Psoas muscle (tissue), 8 donors: ENCODE measurements at regions of chr17 and their contacts with region 1.

Region 1: DNA sequence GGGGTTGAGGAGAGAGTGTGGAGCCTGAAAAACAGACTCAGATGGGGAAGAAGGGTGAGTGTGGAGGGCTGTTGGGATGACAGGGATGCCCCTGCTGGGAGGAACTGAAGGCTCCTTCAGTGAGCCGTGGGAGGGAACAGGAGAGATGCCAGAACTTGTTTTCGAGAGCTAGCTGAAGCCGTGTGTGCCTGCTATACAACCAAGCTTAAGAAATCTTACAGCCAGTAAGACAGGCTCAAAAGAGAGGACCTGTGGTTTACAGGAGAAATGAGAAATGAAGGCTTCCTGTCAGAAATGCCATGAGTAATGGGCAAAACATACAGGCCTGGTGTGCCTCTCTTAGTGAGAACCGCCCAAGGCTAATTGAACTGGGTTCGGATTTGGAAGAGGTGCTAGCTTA is 99.6 kb downstream of the SPACA3 start:
- DNase-seq: no peak
- ATAC-seq: no peak
- H3K4me3 ChIP-seq: no peak overlapping the region
- H3K27ac ChIP-seq: no peak overlapping the region
- H3K4me1 ChIP-seq: no peaks in the 10 kb centered on the region
- H3K27me3 ChIP-seq: peaks cover 0 to 9% (median 3%) of the 10 kb centered on the region in 3 donors
- CTCF ChIP-seq: no peak

Region 2: DNA sequence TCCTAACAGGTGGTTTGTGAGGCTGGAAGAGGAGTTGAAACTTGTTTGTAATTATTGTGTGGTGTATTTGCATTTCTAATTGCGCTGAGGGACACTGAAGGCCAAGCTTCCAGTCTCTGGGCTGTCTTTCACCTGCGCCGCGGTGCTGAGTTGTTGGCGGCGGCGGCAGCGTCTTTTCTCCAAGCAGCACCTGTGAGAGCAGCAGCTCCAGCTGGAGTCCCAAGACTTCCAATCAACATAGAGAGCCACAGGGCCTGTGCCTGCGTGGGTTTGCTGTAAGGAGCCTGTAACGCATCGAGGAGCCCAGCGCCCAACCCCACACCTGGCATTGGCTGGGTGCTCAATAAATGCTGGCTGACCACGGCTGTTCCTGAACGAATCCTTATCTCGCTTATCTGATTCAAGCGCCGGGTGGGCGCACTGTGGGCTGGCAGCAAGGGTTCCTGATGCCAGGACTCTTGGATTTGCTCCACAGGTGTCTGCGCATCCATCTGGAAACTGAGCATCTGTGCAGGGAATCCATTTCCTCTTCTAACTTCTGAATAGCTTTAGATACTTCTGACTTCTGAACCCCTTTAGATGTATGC is 63.7 kb after region 1 on chr17:
- intact Hi-C with region 1: loop called in 1 of 2 experiments (anchors 10 kb)
- DNase-seq: no peak
- ATAC-seq: no peak
- H3K4me3 ChIP-seq: no peak overlapping the region
- H3K27ac ChIP-seq: no peak overlapping the region
- H3K4me1 ChIP-seq: no peaks in the 10 kb centered on the region
- H3K27me3 ChIP-seq: no peaks in the 10 kb centered on the region
- CTCF ChIP-seq: no peak